ENCODE measurements at regions of chr12 and their contacts with region 1.

Region 1: GRCh38 chr12:29957835-29958234 is 174.1 kb upstream of the TMTC1 start:
- DNase-seq: no peak

Region 2: GRCh38 chr12:29980304-29980703 is 22.5 kb after region 1 on chr12:
- intact Hi-C with region 1: loop called (anchors 2 kb)
- DNase-seq: no peak

Measured in cardiac septum (tissue), 1 donor.